Vagina (tissue), 2 donors: ENCODE measurements at regions of chr1 and their contacts with region 1.

Region 1: GRCh38 chr1:99180343-99180808 is 83.9 kb upstream of the PLPPR4 start:
- DNase-seq: no peak
- H3K4me3 ChIP-seq: no peak overlapping the region
- H3K27ac ChIP-seq: no peak overlapping the region
- H3K4me1 ChIP-seq: no peaks in the 10 kb centered on the region
- H3K27me3 ChIP-seq: no peaks in the 10 kb centered on the region
- CTCF ChIP-seq: peak; percentile 34 to 79 (median 77)
- POLR2A ChIP-seq: no peak

Region 2: DNA sequence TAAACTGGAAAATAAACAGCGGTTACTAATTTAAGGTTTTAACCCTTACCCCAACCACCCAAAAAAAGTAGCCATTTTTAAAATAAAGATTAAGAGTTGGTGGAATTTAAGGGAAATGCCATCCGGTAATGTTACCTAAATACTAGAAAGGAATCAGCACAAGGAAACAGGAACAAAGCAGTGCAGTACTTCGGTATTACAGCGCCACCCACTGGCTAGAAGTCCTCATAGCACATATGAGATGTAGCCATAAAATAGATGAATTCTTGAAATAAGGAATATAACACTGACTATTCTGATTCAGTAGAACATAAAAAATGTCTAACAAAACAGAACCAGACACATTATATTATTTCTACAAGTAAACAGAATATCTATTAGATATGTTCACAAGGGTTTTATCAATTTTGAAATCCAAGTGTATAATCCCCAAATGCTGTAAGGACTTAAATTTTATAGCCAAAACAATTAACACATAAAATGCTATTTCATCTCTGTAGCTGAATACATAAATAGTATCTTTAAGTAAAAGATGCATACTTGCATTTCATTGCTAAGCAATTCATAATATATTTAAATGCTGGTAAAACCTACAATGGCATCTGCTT is 527.3 kb after region 1 on chr1:
- intact Hi-C with region 1: loop called (anchors 10 kb)
- DNase-seq: no peak
- H3K4me3 ChIP-seq: no peak overlapping the region
- H3K27ac ChIP-seq: no peak overlapping the region
- H3K4me1 ChIP-seq: no peaks in the 10 kb centered on the region
- H3K27me3 ChIP-seq: no peaks in the 10 kb centered on the region
- CTCF ChIP-seq: peak; percentile 60 to 87 (median 80)
- POLR2A ChIP-seq: no peak